Naive thymus-derived CD4-positive, alpha-beta T cell (primary cell): ENCODE measurements at regions of chr14 and their contacts with region 1.

Region 1: DNA sequence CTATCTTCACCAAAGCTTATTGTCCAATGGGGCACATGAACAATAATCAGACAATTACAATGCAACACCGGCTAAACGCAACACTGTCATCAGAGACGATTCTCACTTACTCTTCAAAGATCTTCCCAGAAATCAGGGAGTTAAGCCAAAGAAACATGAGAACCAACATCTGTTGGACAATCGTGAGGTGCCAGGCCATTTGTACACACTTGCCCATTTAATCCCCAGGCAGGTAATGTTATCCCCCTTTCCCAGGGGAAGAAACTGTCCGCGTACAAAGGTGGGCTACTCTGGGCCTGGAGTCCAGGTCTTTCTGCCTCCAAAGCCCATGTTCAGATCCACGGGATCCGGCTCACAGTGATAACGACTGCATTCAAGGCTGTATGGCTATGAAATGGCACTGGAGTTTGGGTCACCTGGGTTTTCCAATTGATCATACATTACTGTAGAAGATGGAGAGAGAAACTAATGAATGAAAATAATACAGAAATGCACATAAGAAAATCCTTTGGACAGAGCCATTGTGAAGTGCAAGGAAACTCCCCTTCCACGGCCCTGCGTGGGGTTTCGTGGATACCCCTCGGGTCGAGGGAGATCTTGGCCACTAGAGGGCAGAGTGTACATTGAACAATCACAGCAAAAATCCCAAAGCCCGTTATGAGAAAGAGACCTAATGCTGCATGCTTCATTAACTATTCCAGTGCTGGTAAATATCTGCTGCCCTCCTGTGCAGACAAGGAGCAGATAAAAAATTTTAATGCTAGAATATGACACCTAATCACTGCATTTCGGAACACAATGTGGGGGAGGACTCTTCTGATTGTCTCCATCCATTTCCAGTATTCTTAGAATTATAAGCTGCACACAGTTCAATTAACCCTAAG is 111.4 kb downstream of the EGLN3 start:
- DNase-seq: peak in 8 of 9 donors; percentile 2 to 56 (median 30)
- ATAC-seq: peak; percentile 79
- H3K4me3 ChIP-seq: no peak overlapping the region
- H3K4me3 Mint-ChIP-seq: no peak overlapping the region
- H3K27ac ChIP-seq: no peak overlapping the region
- H3K27ac Mint-ChIP-seq: no peak overlapping the region
- H3K4me1 ChIP-seq: no peaks in the 10 kb centered on the region
- H3K4me1 Mint-ChIP-seq: peaks cover 0 to 48% (median 0%) of the 10 kb centered on the region in 7 donors
- H3K27me3 ChIP-seq: no peaks in the 10 kb centered on the region
- H3K27me3 Mint-ChIP-seq: peaks cover 0 to 8% (median 0%) of the 10 kb centered on the region in 5 donors

Region 2: GRCh38 chr14:33682740-33683139 is 156.7 kb before region 1 on chr14:
- CTCF ChIA-PET with region 1: no interaction called
- POLR2A ChIA-PET with region 1: no interaction called
- intact Hi-C with region 1: no loop called
- DNase-seq: no peak
- ATAC-seq: no peak
- H3K4me3 ChIP-seq: no peak overlapping the region
- H3K4me3 Mint-ChIP-seq: no peak overlapping the region
- H3K27ac ChIP-seq: no peak overlapping the region
- H3K27ac Mint-ChIP-seq: no peak overlapping the region
- H3K4me1 ChIP-seq: no peaks in the 10 kb centered on the region
- H3K4me1 Mint-ChIP-seq: no peaks in the 10 kb centered on the region
- H3K27me3 ChIP-seq: no peaks in the 10 kb centered on the region
- H3K27me3 Mint-ChIP-seq: peaks cover 0 to 2% (median 0%) of the 10 kb centered on the region in 5 donors

Region 3: GRCh38 chr14:33764876-33765650 is 74.4 kb before region 1 on chr14:
- CTCF ChIA-PET with region 1: no interaction called
- POLR2A ChIA-PET with region 1: no interaction called
- intact Hi-C with region 1: no loop called
- DNase-seq: no peak
- ATAC-seq: no peak
- H3K4me3 ChIP-seq: no peak overlapping the region
- H3K4me3 Mint-ChIP-seq: no peak overlapping the region
- H3K27ac ChIP-seq: no peak overlapping the region
- H3K27ac Mint-ChIP-seq: no peak overlapping the region
- H3K4me1 ChIP-seq: no peaks in the 10 kb centered on the region
- H3K4me1 Mint-ChIP-seq: no peaks in the 10 kb centered on the region
- H3K27me3 ChIP-seq: no peaks in the 10 kb centered on the region
- H3K27me3 Mint-ChIP-seq: peaks cover 7 to 25% (median 14%) of the 10 kb centered on the region in 5 donors

Region 4: GRCh38 chr14:34120238-34120977 is 281.0 kb after region 1 on chr14:
- CTCF ChIA-PET with region 1: no interaction called
- POLR2A ChIA-PET with region 1: no interaction called
- intact Hi-C with region 1: no loop called
- DNase-seq: no peak
- ATAC-seq: no peak
- H3K4me3 ChIP-seq: no peak overlapping the region
- H3K4me3 Mint-ChIP-seq: no peak overlapping the region
- H3K27ac ChIP-seq: no peak overlapping the region
- H3K27ac Mint-ChIP-seq: peak overlapping the region in 1 of 9 donors; percentile 35
- H3K4me1 ChIP-seq: no peaks in the 10 kb centered on the region
- H3K4me1 Mint-ChIP-seq: no peaks in the 10 kb centered on the region
- H3K27me3 ChIP-seq: no peaks in the 10 kb centered on the region
- H3K27me3 Mint-ChIP-seq: peaks cover 0 to 33% (median 5%) of the 10 kb centered on the region in 5 donors

Region 5: DNA sequence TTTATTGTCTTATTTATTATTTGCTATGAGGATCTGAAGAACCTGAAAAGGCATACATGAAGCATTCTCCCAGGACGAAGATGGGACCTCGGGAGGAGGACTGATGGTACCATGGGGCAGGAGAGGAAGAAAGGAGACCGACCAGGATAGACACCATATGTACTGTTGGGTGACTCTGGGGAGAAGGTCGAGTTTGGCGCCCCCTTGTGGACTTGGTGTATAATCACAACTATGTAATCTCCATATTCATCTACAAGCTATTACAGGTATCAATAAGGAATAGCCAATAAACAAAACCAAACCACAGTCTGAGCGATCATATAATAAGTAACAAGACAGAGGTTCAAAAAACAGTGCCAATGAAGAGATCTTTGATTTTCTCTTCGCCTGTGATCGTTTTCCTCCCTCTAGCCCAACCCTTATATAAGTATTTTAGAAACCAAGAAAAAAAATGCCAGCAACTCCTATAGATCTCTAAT is 483.5 kb after region 1 on chr14:
- CTCF ChIA-PET with region 1: interaction called, 4 read pairs
- POLR2A ChIA-PET with region 1: no interaction called
- intact Hi-C with region 1: loop called in 1 of 2 experiments (anchors 5 kb)
- DNase-seq: peak; percentile 15 to 66 (median 54)
- ATAC-seq: peak; percentile 86
- H3K4me3 ChIP-seq: no peak overlapping the region
- H3K4me3 Mint-ChIP-seq: no peak overlapping the region
- H3K27ac ChIP-seq: no peak overlapping the region
- H3K27ac Mint-ChIP-seq: no peak overlapping the region
- H3K4me1 ChIP-seq: no peaks in the 10 kb centered on the region
- H3K4me1 Mint-ChIP-seq: peaks cover 0 to 5% (median 0%) of the 10 kb centered on the region in 7 donors
- H3K27me3 ChIP-seq: no peaks in the 10 kb centered on the region
- H3K27me3 Mint-ChIP-seq: peaks cover 0 to 15% (median 4%) of the 10 kb centered on the region in 5 donors